Activated CD4-positive, alpha-beta memory T cell treated with anti-CD3 and anti-CD28 coated beads, Interleukin-2, amount 10 ng/mL, durations not matched to agents 7 days and 5 days (primary cell): ENCODE measurements at regions of chr20 and their contacts with region 1.

Region 1: DNA sequence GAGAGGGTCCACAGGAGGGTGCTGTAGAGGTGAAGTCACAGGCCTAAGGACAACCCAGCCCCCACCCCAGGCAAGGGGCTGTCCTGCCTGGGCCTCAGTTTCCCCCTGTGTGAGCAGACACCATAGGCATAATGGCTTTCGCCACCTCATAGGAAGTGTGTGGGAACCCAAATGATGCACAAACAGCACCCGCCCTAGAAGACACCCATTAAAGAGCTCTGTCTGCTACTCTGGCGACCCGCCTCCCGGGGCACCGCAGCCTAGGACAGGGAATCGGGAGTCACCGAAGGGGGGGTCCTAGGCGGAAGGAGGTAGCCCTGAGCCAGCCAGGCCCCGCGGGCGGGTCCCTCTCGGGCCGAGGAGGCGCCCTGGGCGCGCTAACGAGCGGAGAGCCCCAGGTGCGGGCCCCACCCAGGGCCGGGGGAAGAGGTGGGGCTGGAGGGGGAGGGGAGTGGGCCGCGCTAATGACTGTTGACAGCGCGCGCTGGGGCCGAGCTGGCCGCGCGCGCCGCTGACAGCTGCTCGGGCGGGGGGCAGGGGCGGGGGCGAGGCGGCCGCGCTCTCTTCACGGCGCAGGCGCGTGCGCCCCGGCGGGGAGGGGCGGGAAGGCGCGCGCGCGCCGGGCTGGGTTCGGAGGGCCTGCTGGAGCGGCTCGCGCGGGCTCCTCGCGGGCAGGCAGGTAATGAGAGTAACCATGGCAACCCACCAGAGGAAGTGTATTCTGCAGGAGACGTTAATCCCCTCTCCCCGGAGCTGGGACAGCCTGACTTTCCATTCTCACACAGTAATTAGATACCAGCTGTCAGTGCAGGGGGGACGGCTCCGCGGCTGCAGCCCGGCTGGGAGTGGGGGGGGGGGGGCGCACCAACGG is 48.9 kb downstream of the NOL4L start:
- DNase-seq: peak; percentile 91
- H3K4me3 Mint-ChIP-seq: peak overlapping the region; percentile 80
- H3K27ac Mint-ChIP-seq: peak overlapping the region; percentile 100
- H3K4me1 Mint-ChIP-seq: peaks cover 83% of the 10 kb centered on the region
- H3K27me3 Mint-ChIP-seq: no peaks in the 10 kb centered on the region

Region 2: GRCh38 chr20:32484958-32485769 is 51.0 kb before region 1 on chr20:
- CTCF ChIA-PET with region 1: interaction called, 7 read pairs
- POLR2A ChIA-PET with region 1: interaction called, 19 read pairs
- DNase-seq: peak; percentile 88
- H3K4me3 Mint-ChIP-seq: peak overlapping the region; percentile 86
- H3K27ac Mint-ChIP-seq: peak overlapping the region; percentile 86
- H3K4me1 Mint-ChIP-seq: peaks cover 21% of the 10 kb centered on the region
- H3K27me3 Mint-ChIP-seq: no peaks in the 10 kb centered on the region

Region 3: GRCh38 chr20:32521780-32522525 is 14.2 kb before region 1 on chr20:
- CTCF ChIA-PET with region 1: interaction called, 149 read pairs
- POLR2A ChIA-PET with region 1: interaction called, 204 read pairs
- DNase-seq: peak; percentile 69
- H3K4me3 Mint-ChIP-seq: no peak overlapping the region
- H3K27ac Mint-ChIP-seq: peak overlapping the region; percentile 70
- H3K4me1 Mint-ChIP-seq: peaks cover 43% of the 10 kb centered on the region
- H3K27me3 Mint-ChIP-seq: no peaks in the 10 kb centered on the region

Region 4: DNA sequence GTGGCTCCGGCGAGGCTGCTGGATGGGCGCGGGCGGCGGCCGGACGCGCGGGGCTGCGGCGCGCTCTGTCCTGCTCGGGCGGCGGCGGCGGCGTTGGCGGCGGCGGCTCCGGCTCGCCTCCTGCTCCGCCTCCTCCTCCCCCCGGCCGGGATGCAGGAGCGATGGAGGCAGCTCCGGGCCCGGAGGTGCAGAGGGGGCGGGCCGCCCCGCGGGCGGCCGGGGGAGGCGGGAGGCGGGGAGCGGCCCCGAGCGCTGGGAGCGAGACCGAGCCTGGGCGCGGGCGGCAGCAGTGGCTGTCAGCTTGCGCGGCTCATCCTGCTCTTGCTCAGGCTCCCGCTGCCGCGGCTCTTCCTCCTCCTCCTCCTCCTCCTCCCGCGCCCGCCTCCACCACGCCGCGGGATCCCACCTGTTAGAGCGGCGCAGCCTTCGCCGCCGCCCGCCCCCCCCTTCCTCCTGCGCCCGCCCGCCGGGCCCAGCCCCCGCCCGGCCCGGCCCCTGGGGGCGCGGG is 48.9 kb after region 1 on chr20 and contains the start of gene NOL4L:
- CTCF ChIA-PET with region 1: interaction called, 3 read pairs
- POLR2A ChIA-PET with region 1: interaction called, 34 read pairs
- DNase-seq: peak; percentile 35
- H3K4me3 Mint-ChIP-seq: peak within 1 kb of the TSS; percentile 82
- H3K27ac Mint-ChIP-seq: no peak within 1 kb of the TSS
- H3K4me1 Mint-ChIP-seq: peaks cover 27% of the 10 kb centered on the region
- H3K27me3 Mint-ChIP-seq: peaks cover 26% of the 10 kb centered on the region
- total RNA-seq, gene NOL4L: 17.1 to 19.1 TPM

Region 5: GRCh38 chr20:32652739-32653526 is 116.7 kb after region 1 on chr20:
- CTCF ChIA-PET with region 1: interaction called, 12 read pairs
- POLR2A ChIA-PET with region 1: interaction called, 4 read pairs
- DNase-seq: peak; percentile 89
- H3K4me3 Mint-ChIP-seq: no peak overlapping the region
- H3K27ac Mint-ChIP-seq: no peak overlapping the region
- H3K4me1 Mint-ChIP-seq: peaks cover 10% of the 10 kb centered on the region
- H3K27me3 Mint-ChIP-seq: peaks cover 2% of the 10 kb centered on the region